AG04450 (cell line): ENCODE measurements at regions of chr1 and their contacts with region 1.

Region 1: DNA sequence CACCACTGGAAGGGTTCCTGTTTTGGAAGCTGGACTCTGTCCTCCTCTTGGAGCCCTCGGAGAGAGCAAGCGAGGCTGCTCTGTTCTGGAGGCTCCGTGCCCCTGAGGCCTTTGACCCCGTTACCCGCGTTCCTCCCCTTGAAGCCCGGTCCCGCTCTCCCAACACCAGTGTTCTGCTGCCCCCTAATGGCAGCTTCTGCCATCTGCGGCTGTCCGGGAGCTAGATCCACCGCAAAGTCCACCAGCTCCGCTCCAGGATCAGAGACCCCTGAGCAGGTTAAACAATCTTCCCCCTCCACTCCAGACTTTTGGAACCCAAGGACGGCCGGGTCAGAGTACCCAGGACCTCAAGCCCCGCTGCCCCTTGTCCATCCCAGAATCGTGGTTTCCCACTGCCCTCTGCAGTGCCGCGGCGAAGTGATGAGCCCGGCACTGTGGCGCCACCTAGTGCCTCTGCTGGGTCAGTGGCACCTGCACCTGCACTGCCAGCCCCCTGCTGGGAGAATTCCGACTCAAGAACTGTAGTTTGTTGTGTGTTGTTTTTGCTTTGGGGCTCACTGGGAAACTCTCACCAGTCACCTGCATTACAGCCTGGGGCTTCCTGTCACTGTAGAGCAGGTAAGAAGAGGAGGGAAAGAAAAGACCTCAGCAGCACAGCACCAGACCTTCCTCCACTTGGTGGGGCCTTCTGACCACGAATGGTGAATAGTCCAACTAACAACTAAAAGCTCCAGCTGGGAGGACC is 63.5 kb upstream of the NFASC start:
- DNase-seq: peak; percentile 33
- H3K4me3 ChIP-seq: peak overlapping the region; percentile 62
- H3K27ac ChIP-seq: no peak overlapping the region
- H3K27me3 ChIP-seq: peaks cover 3% of the 10 kb centered on the region
- CTCF ChIP-seq: peak; percentile 98

Region 2: DNA sequence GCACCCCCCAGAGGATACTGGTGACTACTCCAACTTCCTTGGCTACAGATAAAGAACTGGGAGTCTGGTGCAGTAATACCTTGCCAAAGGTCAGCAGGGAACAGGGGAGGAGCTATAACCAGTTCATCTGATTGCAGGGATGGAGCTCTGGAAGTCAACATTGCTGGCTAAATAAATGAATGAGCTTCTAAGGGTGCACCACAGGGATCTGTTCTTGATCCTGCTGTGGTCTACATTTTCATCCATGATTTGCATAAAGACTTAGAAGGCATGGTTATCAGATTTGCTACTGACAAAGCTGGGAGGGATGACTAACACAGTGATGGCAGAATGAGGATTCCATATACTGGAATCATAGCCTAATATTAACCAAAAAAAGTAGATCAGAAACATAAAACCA is 465.7 kb before region 1 on chr1:
- CTCF ChIA-PET with region 1: no interaction called
- POLR2A ChIA-PET with region 1: no interaction called
- DNase-seq: no peak
- H3K4me3 ChIP-seq: no peak overlapping the region
- H3K27ac ChIP-seq: no peak overlapping the region
- H3K27me3 ChIP-seq: peaks cover 3% of the 10 kb centered on the region
- CTCF ChIP-seq: no peak

Region 3: DNA sequence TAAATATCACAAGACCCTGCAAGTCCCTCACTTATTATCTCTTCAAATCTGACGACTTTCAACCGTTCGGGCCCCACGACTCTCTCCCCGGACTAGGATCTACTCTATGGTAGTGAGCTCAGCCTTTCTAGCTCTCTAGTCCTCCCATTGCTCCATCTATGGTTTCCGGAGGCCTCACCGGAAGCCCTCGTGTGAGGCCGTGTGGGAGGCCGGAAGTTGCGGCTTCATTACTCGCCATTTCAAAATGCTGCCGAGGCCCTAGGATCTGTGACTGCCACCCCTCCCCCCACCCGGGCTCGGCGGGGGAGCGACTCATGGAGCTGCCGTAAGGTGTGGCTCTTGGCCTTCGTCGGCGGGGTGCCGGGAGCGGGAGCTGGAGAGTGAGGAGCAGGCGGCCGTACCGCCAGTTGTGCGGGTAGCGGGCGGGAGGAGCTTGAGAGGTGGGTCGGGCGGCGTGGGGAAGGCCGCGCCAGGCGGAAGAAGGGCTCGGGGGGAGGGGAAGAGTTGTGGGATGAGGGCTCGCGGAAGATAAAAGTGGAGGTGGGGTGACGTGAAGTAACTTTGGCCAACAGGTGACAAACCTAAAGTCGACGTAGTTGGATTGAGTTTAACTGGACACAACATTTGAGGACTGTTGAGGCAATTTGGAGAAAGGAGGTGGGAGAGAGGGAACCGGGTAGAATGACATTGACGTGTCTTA is 290.8 kb before region 1 on chr1 and contains the start of gene MDM4:
- CTCF ChIA-PET with region 1: interaction called, 14 read pairs
- POLR2A ChIA-PET with region 1: no interaction called
- DNase-seq: peak; percentile 90
- H3K4me3 ChIP-seq: peak within 1 kb of the TSS; percentile 88
- H3K27ac ChIP-seq: peak within 1 kb of the TSS; percentile 94
- H3K27me3 ChIP-seq: no peaks in the 10 kb centered on the region
- CTCF ChIP-seq: no peak
- polyA plus RNA-seq, gene MDM4: 16.3 and 21.4 TPM in 2 replicates

Region 4: DNA sequence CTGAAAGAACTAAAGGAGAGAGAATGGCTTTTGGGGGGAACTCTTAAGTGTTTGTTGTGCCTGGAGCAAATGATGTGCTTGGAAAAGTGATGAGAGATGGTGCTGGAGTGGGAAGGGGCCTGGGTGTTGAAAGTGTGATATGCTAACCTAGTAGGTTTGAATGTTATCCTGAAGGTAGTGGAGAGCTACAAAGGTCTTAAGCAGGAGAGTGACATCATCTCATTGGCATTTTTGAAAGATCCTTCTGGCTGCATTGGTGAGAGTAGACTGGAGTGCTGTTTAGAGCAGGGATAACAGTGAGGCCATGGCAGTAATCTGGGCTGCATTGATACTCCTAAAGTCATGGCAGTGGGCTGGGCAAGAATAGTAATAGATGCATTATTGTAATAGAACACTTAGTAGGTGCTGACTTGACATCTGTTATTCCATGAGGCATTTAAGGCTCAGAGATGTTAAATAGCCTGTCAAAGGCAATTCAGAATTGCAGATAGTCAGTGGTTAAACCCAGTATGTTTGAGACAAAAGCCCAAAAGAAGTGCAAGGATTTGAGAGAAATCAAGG is 246.4 kb before region 1 on chr1:
- CTCF ChIA-PET with region 1: interaction called, 364 read pairs
- POLR2A ChIA-PET with region 1: no interaction called
- DNase-seq: peak; percentile 20
- H3K4me3 ChIP-seq: no peak overlapping the region
- H3K27ac ChIP-seq: no peak overlapping the region
- H3K27me3 ChIP-seq: no peaks in the 10 kb centered on the region
- CTCF ChIP-seq: no peak

Region 5: GRCh38 chr1:204591594-204592051 is 215.5 kb before region 1 on chr1:
- CTCF ChIA-PET with region 1: interaction called, 16 read pairs
- POLR2A ChIA-PET with region 1: no interaction called
- DNase-seq: peak; percentile 16
- H3K4me3 ChIP-seq: no peak overlapping the region
- H3K27ac ChIP-seq: no peak overlapping the region
- H3K27me3 ChIP-seq: no peaks in the 10 kb centered on the region
- CTCF ChIP-seq: no peak

Region 6: GRCh38 chr1:204763706-204764427 is 43.2 kb before region 1 on chr1:
- CTCF ChIA-PET with region 1: interaction called, 26 read pairs
- POLR2A ChIA-PET with region 1: no interaction called
- DNase-seq: peak; percentile 23
- H3K4me3 ChIP-seq: no peak overlapping the region
- H3K27ac ChIP-seq: no peak overlapping the region
- H3K27me3 ChIP-seq: peaks cover 6% of the 10 kb centered on the region
- CTCF ChIP-seq: peak; percentile 69

Region 7: DNA sequence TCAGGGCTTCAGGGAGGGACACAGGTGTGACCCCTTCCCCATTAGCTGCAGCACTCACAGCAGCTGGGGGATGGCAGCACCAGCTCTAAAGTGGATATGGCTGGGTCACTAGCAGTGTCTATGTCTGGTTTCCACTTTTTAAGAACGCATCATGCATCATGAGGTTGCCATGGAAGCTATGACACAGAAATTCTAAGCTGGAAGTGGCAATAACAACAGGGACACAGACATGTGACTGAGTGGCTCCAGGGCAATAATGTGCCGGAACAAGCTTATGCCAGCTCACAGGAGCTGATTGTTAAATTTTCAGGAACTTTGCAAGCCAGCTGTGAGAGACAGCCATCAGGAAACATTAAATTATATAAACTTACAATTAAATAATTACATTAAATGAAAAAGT is 12.4 kb after region 1 on chr1:
- CTCF ChIA-PET with region 1: interaction called, 44 read pairs
- POLR2A ChIA-PET with region 1: no interaction called
- DNase-seq: no peak
- H3K4me3 ChIP-seq: no peak overlapping the region
- H3K27ac ChIP-seq: no peak overlapping the region
- H3K27me3 ChIP-seq: peaks cover 10% of the 10 kb centered on the region
- CTCF ChIP-seq: no peak

Region 8: GRCh38 chr1:204941421-204942338 is 134.6 kb after region 1 on chr1:
- CTCF ChIA-PET with region 1: interaction called, 16 read pairs
- POLR2A ChIA-PET with region 1: no interaction called
- DNase-seq: no peak
- H3K4me3 ChIP-seq: no peak overlapping the region
- H3K27ac ChIP-seq: no peak overlapping the region
- H3K27me3 ChIP-seq: peaks cover 17% of the 10 kb centered on the region
- CTCF ChIP-seq: peak; percentile 75